Mammary epithelial cell (primary cell): ENCODE measurements at regions of chr5 and their contacts with region 1.

Region 1: GRCh38 chr5:96876292-96876850 is at the start of gene ERAP2:
- DNase-seq: peak; percentile 51
- H3K4me3 ChIP-seq: peak within 1 kb of the TSS; percentile 46 to 75 (median 74)
- H3K27ac ChIP-seq: peak within 1 kb of the TSS; percentile 78
- H3K4me1 ChIP-seq: peaks cover 17% of the 10 kb centered on the region
- H3K27me3 ChIP-seq: no peaks in the 10 kb centered on the region
- CTCF ChIP-seq: no peak
- total RNA-seq, gene ERAP2: 2.8 to 14.3 TPM

Region 2: DNA sequence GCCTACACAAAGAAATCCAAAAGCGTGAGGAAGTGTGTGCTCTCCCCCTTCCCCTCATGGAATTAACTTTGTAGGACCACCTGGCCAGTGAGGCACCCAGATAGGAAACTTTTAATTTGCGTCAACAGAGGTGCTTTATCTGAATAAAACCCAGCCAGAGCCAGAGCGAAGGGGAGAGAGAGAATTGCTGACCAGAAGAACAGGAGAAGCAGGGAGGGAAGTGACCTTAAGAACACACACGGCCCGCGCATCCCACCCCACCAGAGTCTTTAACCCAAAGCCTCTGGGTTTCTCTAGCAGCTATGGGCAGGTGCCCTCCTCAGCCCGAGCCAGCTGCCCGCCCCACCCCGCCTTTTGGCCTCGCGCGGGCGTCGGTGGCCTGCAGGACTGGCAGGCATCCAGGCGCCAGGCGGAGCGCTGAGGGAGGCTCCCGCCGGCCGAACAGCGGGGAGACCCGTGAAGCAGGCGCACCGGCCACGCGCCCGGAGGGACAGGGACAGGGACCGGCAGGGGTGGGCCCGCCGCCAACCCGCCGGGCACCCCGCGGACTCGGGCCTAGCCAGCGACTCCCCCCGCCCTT is 69.2 kb before region 1 on chr5:
- CTCF ChIA-PET with region 1: no interaction called
- dilution Hi-C with region 1: no loop called
- in situ Hi-C with region 1: no loop called
- intact Hi-C with region 1: loop called (anchors 5 kb)
- DNase-seq: peak; percentile 67
- H3K4me3 ChIP-seq: peak overlapping the region; percentile 72 to 92 (median 78)
- H3K27ac ChIP-seq: peak overlapping the region; percentile 91
- H3K4me1 ChIP-seq: peaks cover 23% of the 10 kb centered on the region
- H3K27me3 ChIP-seq: no peaks in the 10 kb centered on the region
- CTCF ChIP-seq: no peak

Region 3: GRCh38 chr5:96823900-96824351 is 52.4 kb before region 1 on chr5:
- CTCF ChIA-PET with region 1: no interaction called
- dilution Hi-C with region 1: no loop called
- in situ Hi-C with region 1: no loop called
- intact Hi-C with region 1: loop called (anchors 2 kb)
- DNase-seq: peak; percentile 99
- H3K4me3 ChIP-seq: no peak overlapping the region
- H3K27ac ChIP-seq: peak overlapping the region; percentile 89
- H3K4me1 ChIP-seq: peaks cover 32% of the 10 kb centered on the region
- H3K27me3 ChIP-seq: no peaks in the 10 kb centered on the region
- CTCF ChIP-seq: no peak

Region 4: DNA sequence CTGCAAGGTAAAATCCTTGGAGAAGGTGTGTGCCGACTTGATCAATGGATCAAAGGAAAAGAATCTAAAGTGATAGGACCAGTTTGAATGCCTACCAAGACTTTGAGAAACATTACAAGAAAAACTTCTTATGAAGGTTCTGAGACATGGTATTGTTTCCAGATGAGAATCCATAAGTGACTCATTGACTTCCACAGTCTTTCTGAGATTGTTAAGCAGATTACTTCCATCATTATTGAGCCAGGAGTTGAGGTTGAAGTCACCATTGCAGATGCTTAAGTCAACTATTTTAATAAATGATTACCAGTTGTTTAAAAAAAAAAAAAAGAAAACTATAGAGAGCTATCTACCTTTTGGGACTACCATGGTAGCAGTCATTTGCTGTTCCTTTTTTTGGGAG is 66.5 kb after region 1 on chr5:
- CTCF ChIA-PET with region 1: no interaction called
- dilution Hi-C with region 1: loop called (anchors 5 kb)
- in situ Hi-C with region 1: no loop called
- intact Hi-C with region 1: no loop called
- DNase-seq: peak; percentile 20
- H3K4me3 ChIP-seq: no peak overlapping the region
- H3K27ac ChIP-seq: no peak overlapping the region
- H3K4me1 ChIP-seq: peaks cover 14% of the 10 kb centered on the region
- H3K27me3 ChIP-seq: no peaks in the 10 kb centered on the region
- CTCF ChIP-seq: no peak

Region 5: GRCh38 chr5:97085459-97086181 is 209.2 kb after region 1 on chr5:
- CTCF ChIA-PET with region 1: no interaction called
- dilution Hi-C with region 1: no loop called
- in situ Hi-C with region 1: no loop called
- intact Hi-C with region 1: no loop called
- DNase-seq: no peak
- H3K4me3 ChIP-seq: no peak overlapping the region
- H3K27ac ChIP-seq: no peak overlapping the region
- H3K4me1 ChIP-seq: no peaks in the 10 kb centered on the region
- H3K27me3 ChIP-seq: peaks cover 2% of the 10 kb centered on the region
- CTCF ChIP-seq: no peak

Region 6: GRCh38 chr5:97167435-97167834 is 291.1 kb after region 1 on chr5:
- CTCF ChIA-PET with region 1: interaction called, 3 read pairs
- dilution Hi-C with region 1: loop called (anchors 10 kb)
- in situ Hi-C with region 1: loop called (anchors 5 to 10 kb)
- intact Hi-C with region 1: no loop called
- DNase-seq: no peak
- H3K4me3 ChIP-seq: no peak overlapping the region
- H3K27ac ChIP-seq: no peak overlapping the region
- H3K4me1 ChIP-seq: no peaks in the 10 kb centered on the region
- H3K27me3 ChIP-seq: no peaks in the 10 kb centered on the region
- CTCF ChIP-seq: no peak